Heart right ventricle (tissue), 16 donors: ENCODE measurements at regions of chr11 and their contacts with region 1.

Region 1: GRCh38 chr11:75547580-75548058 is 14.4 kb upstream of the SERPINH1 start:
- DNase-seq: peak; percentile 59 to 66
- ATAC-seq: peak; percentile 79 to 90 (median 88)
- H3K4me3 ChIP-seq: no peak overlapping the region
- H3K27ac ChIP-seq: peak overlapping the region in 1 of 10 donors; percentile 47
- H3K4me1 ChIP-seq: peaks cover 0 to 7% (median 5%) of the 10 kb centered on the region in 9 donors
- H3K27me3 ChIP-seq: no peaks in the 10 kb centered on the region
- CTCF ChIP-seq: peak; percentile 85 to 97 (median 90)

Region 2: GRCh38 chr11:75582895-75583717 is 35.5 kb after region 1 on chr11:
- intact Hi-C with region 1: loop called in 2 of 10 experiments (anchors 2 to 5 kb)
- DNase-seq: peak; percentile 66 to 68
- ATAC-seq: peak; percentile 68 to 93 (median 88)
- H3K4me3 ChIP-seq: peak overlapping the region; percentile 81 to 98 (median 88)
- H3K27ac ChIP-seq: peak overlapping the region; percentile 98 to 100 (median 98)
- H3K4me1 ChIP-seq: peaks cover 5 to 39% (median 25%) of the 10 kb centered on the region in 9 donors
- H3K27me3 ChIP-seq: no peaks in the 10 kb centered on the region
- CTCF ChIP-seq: peak in 6 of 9 donors; percentile 30 to 55 (median 42)

Region 3: DNA sequence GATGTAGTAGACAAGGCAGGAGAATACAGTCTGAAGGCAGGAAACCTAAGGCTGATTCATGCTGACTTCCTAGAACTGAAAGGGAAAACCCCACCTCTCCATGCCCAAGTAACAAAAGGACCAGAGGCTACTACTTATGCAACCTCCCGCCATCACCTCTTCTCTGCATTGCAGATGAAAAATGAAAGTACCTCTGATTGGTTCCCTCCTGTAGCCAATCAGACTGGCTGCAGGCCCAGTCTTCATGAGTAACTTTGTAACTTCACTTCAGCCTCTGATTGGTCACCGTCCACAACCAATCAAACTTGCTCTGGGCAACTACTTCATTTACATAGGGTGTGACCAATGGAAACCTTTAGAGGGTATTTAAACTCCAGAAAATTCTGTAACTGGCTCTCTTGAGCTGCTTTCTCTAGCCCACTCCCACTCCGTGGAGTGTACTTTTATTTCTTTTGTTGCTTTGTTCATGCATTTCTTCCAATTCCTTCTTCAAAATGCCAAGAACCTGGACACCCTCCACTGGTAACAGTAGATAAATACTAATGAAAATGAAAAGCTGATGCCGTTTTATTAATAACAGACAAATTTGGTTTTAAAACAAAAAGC is 126.5 kb after region 1 on chr11:
- intact Hi-C with region 1: loop called in 3 of 10 experiments (anchors 5 to 10 kb)
- DNase-seq: no peak
- ATAC-seq: no peak
- H3K4me3 ChIP-seq: no peak overlapping the region
- H3K27ac ChIP-seq: no peak overlapping the region
- H3K4me1 ChIP-seq: peaks cover 0 to 4% (median 0%) of the 10 kb centered on the region in 9 donors
- H3K27me3 ChIP-seq: peaks cover 0 to 36% (median 13%) of the 10 kb centered on the region in 7 donors
- CTCF ChIP-seq: no peak

Region 4: DNA sequence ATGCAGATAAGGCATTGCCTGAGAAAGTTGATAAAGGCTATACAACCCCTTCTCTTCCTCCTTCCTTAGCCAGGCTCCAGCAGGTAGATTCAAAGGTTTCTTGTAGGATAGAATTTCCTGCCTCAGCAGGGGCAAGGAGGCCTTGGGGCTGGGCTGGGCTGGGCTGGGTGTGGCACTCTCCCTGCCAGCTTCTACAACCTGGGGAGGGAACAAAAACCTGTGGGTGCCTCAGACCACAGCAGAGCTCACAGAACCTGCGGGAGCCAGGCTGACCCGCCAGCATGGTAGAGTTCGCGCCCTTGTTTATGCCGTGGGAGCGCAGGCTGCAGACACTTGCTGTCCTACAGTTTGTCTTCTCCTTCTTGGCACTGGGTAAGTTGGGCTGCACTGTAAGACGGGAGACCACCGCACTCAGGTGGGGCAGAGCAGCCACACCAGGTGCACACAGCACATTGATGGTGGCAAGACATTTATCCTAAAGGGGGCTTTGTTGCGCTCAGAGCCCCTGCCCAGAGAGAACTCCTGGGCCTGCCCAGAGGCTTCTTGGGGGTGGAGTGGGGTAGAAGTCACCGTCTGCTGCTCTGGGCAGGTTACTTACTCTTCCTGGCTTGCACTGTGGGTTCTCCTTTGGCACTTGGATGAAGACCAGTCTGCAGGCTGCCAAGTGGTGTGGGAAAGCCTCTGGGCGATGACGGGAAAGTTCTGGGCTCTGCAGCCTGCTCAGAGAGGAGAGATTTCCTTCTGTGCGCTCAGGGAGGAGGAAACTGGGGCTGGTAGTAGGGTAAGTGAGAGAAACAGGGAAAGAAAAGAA is 170.2 kb after region 1 on chr11 and contains the start of gene MOGAT2:
- intact Hi-C with region 1: loop called in 1 of 10 experiments (anchors 5 kb)
- DNase-seq: no peak
- ATAC-seq: peak; percentile 54 to 91 (median 73)
- H3K4me3 ChIP-seq: no peak within 1 kb of the TSS
- H3K27ac ChIP-seq: no peak within 1 kb of the TSS
- H3K4me1 ChIP-seq: peaks cover 0 to 30% (median 0%) of the 10 kb centered on the region in 9 donors
- H3K27me3 ChIP-seq: no peaks in the 10 kb centered on the region
- CTCF ChIP-seq: no peak
- total RNA-seq, gene MOGAT2: 0.13 to 0.35 (median 0.20) TPM in 4 of 10 donors, not detected in the others

Region 5: GRCh38 chr11:75867775-75868374 is 320.3 kb after region 1 on chr11:
- intact Hi-C with region 1: loop called in 3 of 10 experiments (anchors 5 to 10 kb)
- DNase-seq: peak in 1 of 2 donors; percentile 58
- ATAC-seq: peak; percentile 55 to 80 (median 68)
- H3K4me3 ChIP-seq: no peak overlapping the region
- H3K27ac ChIP-seq: no peak overlapping the region
- H3K4me1 ChIP-seq: peaks cover 5 to 34% (median 23%) of the 10 kb centered on the region in 9 donors
- H3K27me3 ChIP-seq: no peaks in the 10 kb centered on the region
- CTCF ChIP-seq: peak; percentile 72 to 89 (median 85)